ENCODE measurements at regions of chr16 and their contacts with region 1.

Region 1: DNA sequence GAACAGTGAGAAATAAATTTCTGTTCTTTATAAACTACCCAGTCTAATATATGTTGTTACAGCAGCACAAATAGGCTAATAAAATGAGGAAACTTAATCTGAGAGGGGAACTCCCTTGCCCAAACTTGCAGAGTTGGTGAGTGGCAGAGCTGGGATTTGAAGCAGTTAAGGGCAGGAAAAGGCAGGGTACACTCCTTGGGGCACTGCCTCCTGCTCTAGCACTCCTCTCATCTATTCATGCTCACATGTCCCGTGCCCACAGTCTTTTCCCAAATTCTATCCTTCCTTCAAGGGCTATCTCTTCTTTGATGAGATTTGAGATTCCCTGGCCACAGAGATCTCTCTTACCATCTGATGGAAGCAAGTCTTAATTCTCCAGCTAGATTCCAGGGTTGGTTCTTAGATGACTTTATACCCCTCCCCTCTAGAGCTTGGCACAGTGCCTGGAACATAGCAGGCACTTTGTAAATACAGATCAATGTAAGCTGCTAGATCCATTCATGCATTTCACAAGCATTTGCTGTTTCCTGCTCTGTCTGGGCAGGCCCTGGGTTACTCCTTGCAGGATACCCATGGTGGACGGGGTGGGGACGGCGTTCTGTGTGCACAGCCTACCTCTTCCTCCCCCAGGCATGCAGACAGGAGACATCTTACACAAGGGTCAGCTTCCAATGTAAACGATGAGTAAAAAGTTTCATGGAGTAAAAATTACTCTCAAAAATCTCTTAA is 39.2 kb upstream of the ABCC12 start:
- DNase-seq: no peak
- CTCF ChIP-seq: no peak

Region 2: DNA sequence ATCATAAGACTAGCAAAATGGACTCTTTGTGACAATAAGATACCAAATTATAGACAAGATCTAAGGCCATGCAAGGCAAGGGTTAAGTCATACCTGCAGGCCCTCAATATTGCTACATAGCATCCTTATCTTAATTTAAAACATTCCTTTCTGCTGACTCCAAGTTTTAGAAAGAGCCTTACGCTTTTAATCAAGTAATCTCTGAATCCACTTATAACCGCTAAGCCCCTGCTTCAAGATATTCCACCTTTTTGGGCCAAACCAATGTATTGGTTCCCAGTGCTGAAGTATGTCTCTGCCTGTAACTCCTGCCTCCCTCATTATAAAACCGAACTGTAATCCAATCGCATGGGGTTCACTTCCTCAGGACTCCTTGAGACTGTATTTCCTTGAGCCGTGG is 478.4 kb before region 1 on chr16:
- in situ Hi-C with region 1: no loop called
- DNase-seq: no peak
- CTCF ChIP-seq: no peak

Region 3: DNA sequence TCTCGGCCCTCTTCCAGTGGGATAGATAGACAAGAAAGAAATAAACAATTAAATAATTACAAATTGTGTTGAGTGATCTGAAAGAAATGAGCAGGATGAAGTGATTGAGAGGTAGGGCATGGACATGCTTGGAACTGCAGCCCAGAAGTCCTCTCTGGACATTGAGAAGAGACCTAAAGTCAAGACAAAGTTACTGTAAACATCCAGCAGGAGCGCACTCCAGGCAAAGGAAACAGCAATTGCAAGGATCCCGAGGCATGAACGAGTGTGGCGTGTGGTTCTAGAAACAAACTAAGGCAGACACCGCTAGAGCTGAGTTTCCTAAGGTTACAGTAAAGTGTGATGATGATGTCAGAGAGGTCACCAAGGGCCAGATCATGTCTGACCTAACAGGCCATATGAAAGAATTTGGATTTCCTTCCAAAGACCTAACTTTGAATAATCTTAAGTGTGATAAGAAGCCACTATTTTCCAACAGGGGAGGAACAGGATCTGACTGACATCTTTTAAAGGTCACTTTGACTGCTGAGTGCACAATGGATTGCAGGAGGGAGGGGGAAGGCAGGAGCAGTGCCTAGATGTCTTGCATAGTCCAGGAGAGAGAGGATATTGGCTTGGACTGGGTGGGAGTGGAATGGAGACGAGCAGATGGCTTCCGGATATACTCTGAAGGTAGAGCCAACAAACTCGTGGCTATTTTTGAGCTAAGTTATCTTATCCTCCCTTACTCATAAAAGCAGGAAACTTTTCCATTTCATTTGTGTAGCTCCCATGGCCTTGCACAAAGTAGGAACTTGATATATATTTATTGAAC is 58.2 kb before region 1 on chr16:
- in situ Hi-C with region 1: loop called (anchors 10 kb)
- DNase-seq: no peak
- CTCF ChIP-seq: no peak

Region 4: DNA sequence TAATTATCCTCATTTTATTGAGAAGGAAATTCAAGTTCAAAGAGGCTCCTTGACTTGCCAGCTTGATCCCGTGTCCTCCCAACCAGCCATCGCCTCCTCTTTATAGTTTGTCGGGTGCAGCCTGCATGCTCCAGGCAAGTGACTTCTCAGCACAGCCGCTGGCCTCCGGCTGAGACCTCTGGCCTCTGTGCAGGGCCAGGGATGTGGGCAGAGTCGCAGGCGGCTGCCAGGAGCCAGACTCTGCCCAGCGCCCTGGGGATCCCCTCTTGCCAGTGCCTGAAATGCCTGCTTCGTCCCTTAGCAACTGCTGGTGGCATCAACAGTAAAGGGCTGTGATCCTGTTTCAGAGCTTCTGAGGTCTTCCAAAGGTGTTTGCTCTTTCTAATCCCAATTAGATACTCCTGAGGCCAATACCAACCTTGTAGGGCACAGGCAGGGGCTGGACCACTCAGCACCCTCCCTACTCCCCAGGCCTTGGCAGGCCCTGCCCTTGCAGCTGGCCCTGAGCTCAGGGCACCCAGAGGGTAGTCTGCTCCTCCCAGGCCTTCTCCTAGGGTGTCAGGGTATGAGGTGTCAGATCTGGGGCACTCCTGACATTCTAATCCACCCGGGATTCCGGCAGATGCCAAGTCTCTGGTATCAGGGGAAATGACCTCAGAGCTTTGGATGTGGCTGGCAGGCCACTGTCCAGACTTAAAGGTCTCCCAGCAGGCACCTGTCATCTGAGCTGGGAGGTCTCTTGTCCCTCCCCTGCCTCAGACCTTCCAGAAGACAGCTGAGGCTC is 258.2 kb after region 1 on chr16:
- in situ Hi-C with region 1: no loop called
- DNase-seq: no peak
- CTCF ChIP-seq: no peak